ENCODE measurements at regions of chr12 and their contacts with region 1.

Region 1: DNA sequence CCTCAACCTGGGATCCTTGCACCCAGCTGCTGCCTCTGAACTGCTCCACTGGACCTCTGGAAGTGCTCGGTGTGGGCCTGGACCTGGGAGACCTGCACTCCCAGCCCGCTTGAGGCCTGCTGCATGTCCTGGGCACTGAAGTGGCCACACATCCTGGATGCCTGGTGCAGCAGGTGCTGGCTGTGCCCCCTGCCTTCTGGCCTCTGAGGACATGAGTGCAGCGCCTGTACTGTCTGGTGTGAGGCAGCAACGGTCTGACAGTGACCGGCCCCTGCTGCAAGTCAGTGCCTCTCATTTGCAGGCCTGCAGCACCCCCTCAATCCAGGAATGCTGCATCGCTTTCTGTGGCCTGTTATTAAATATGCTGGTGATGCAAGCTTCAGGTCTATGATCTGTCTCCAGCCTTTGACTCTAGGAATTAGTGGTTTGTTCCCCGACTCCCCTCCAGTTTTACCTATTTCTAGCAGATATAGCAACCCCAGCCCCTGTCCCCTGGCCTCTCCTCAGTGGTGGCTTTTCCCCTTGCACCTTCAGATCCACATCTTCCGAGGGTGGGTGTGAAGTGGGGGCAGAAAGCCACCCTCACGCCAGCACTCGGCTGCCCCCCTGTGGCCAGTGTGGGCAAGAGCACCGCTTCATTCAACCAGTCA is 3.6 kb downstream of the SMIM41 start:
- DNase-seq: no peak
- ATAC-seq: peak; percentile 79
- H3K4me3 ChIP-seq: no peak overlapping the region
- H3K27ac ChIP-seq: no peak overlapping the region
- H3K4me1 ChIP-seq: peaks cover 16% of the 10 kb centered on the region
- H3K27me3 ChIP-seq: no peaks in the 10 kb centered on the region; a peak in 1 of 4 replicates
- CTCF ChIP-seq: peak; percentile 91 to 98 (median 98)
- EP300 ChIP-seq: no peak
- POLR2A ChIP-seq: no peak
- RAD21 ChIP-seq: peak; percentile 90

Region 2: DNA sequence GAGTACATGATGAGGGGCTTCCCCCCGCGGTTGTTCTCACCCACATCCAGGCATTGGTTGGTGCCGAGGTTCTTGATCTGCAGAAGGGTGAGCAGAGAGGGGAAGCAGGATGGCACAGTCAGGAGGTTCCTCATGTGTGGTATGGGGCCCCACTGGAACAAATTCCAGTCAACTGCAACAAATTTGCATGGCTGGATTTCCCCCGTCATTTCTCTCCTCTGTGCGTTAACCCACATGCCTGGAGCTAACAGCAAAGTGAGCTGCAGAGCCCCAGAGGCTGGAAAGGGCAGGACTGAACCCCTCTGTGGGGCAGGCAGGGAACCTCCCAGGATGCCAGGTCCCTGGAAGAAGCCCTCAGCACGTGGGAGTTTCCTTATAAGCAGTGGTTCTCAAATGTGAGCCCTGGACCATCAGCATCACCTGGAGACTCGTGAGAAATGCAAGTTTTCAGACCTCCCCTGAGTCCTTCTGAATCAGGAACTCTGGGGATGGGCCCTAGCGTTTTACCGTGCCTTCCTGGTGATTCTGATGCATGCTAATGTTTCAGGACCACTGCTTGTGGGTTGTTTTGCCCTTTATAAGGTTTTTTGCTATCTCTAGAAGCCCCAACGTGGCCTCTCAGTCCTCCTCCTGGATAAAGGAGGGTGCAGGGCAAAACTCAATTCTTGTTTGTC is 725.6 kb before region 1 on chr12:
- CTCF ChIA-PET with region 1: no interaction called
- POLR2A ChIA-PET with region 1: no interaction called
- RAD21 ChIA-PET with region 1: no interaction called
- SMC1A ChIA-PET with region 1: no interaction called
- in situ Hi-C with region 1: no loop called
- intact Hi-C with region 1: no loop called
- DNase-seq: peak; percentile 64
- ATAC-seq: peak; percentile 93
- H3K4me3 ChIP-seq: 0 out of 2 replicates have a peak overlapping the region, but pooled peaks have one; percentile 5
- H3K27ac ChIP-seq: peak overlapping the region; percentile 61
- H3K4me1 ChIP-seq: peaks cover 21% of the 10 kb centered on the region
- H3K27me3 ChIP-seq: no peaks in the 10 kb centered on the region
- CTCF ChIP-seq: no peak
- EP300 ChIP-seq: peak; percentile 10 to 44; a peak in 1 of 4 replicates
- POLR2A ChIP-seq: no peak
- RAD21 ChIP-seq: no peak

Region 3: GRCh38 chr12:51970904-51971646 is 112.0 kb before region 1 on chr12:
- CTCF ChIA-PET with region 1: no interaction called
- POLR2A ChIA-PET with region 1: no interaction called
- RAD21 ChIA-PET with region 1: no interaction called
- SMC1A ChIA-PET with region 1: no interaction called
- in situ Hi-C with region 1: no loop called
- intact Hi-C with region 1: no loop called
- DNase-seq: peak; percentile 93
- ATAC-seq: peak; percentile 97
- H3K4me3 ChIP-seq: no peak overlapping the region
- H3K27ac ChIP-seq: no peak overlapping the region
- H3K4me1 ChIP-seq: peaks cover 30% of the 10 kb centered on the region
- H3K27me3 ChIP-seq: peaks cover 0 to 8% of the 10 kb centered on the region in 2 experiments; a peak in 3 of 4 replicates
- CTCF ChIP-seq: peak; percentile 47 to 64 (median 60)
- EP300 ChIP-seq: peak; percentile 81 to 87; a peak in 3 of 4 replicates
- POLR2A ChIP-seq: no peak
- RAD21 ChIP-seq: 0 out of 2 replicates have a peak, but pooled peaks have one; percentile 8

Region 4: DNA sequence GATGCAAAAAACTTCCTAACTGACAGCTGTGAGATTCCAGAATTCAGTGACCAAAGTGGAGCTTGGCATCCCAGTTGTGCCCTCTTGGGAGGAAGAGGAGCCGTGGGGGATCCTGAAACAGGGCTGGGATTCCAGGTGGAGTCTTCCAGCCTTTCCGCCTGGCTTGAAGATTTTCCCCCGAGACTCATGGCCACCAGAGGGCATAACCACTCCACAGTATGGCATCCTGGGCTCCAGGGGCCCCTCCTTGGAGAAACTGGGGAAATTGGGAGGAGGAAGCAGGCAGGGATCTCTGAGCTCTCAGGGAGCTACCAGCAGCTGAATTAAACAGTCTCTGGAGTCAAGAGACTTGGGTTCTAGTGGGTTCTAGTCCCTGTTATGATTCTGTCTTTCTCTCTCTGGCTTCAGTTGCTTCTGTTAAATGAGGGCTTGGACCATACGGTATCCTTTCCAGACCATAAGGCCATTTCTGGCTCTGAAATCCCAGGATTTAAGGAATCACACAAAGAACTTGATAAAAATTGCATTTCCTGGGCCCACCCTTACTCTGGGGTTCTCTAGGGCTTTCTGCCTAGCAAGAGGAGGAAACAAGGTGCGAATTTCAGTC is 79.0 kb before region 1 on chr12:
- CTCF ChIA-PET with region 1: interaction called, 11 read pairs
- POLR2A ChIA-PET with region 1: no interaction called
- RAD21 ChIA-PET with region 1: no interaction called
- SMC1A ChIA-PET with region 1: interaction called, 5 read pairs
- in situ Hi-C with region 1: no loop called
- intact Hi-C with region 1: no loop called
- DNase-seq: no peak
- ATAC-seq: no peak
- H3K4me3 ChIP-seq: no peak overlapping the region
- H3K27ac ChIP-seq: no peak overlapping the region
- H3K4me1 ChIP-seq: peaks cover 11% of the 10 kb centered on the region
- H3K27me3 ChIP-seq: peaks cover 9 to 21% of the 10 kb centered on the region in 2 experiments; a peak in 3 of 4 replicates
- CTCF ChIP-seq: peak; percentile 37 to 68 (median 59); a peak in 5 of 6 replicates
- EP300 ChIP-seq: no peak
- POLR2A ChIP-seq: no peak
- RAD21 ChIP-seq: peak; percentile 56

Region 5: GRCh38 chr12:52032804-52033502 is 50.2 kb before region 1 on chr12:
- CTCF ChIA-PET with region 1: interaction called, 622 read pairs
- POLR2A ChIA-PET with region 1: interaction called, 7 read pairs
- RAD21 ChIA-PET with region 1: interaction called, 88 read pairs
- SMC1A ChIA-PET with region 1: interaction called, 322 read pairs
- in situ Hi-C with region 1: loop called (anchors 5 kb)
- intact Hi-C with region 1: no loop called
- DNase-seq: peak; percentile 55
- ATAC-seq: peak; percentile 94
- H3K4me3 ChIP-seq: peak overlapping the region; percentile 51; the same call in 1 of the 2 replicates
- H3K27ac ChIP-seq: no peak overlapping the region
- H3K4me1 ChIP-seq: peaks cover 17% of the 10 kb centered on the region
- H3K27me3 ChIP-seq: no peaks in the 10 kb centered on the region; a peak in 1 of 4 replicates
- CTCF ChIP-seq: no peak
- EP300 ChIP-seq: no peak
- POLR2A ChIP-seq: peak; percentile 62
- RAD21 ChIP-seq: no peak

Region 6: DNA sequence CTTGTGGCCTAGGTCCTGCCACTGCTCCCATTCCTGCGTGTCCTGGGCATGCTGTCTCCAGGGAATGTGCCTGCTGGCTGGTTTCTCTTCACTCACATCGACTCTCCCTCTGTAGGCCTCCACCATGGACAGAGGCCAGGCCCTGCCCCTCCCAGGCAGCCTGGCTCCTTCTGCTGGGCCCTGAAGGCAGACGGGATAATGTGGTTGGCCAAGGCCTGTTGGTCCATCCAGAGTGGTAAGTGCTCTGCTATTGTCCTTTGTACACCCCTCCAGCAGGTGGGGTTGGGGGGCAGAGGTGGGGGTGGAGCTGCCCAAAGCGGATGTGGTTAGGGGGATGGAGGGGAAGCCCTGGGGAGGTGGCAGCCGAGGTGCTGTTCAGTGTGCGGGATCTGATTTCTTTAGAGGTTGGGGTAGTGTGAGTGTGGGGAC is 41.4 kb before region 1 on chr12:
- CTCF ChIA-PET with region 1: interaction called, 11 read pairs
- POLR2A ChIA-PET with region 1: no interaction called
- RAD21 ChIA-PET with region 1: interaction called, 5 read pairs
- SMC1A ChIA-PET with region 1: no interaction called
- in situ Hi-C with region 1: no loop called
- intact Hi-C with region 1: no loop called
- DNase-seq: no peak
- ATAC-seq: peak; percentile 66
- H3K4me3 ChIP-seq: no peak overlapping the region
- H3K27ac ChIP-seq: no peak overlapping the region; the same call in 1 of the 2 replicates
- H3K4me1 ChIP-seq: peaks cover 15% of the 10 kb centered on the region
- H3K27me3 ChIP-seq: no peaks in the 10 kb centered on the region
- CTCF ChIP-seq: peak; percentile 7 to 28 (median 19); a peak in 2 of 6 replicates
- EP300 ChIP-seq: no peak; a peak in 1 of 4 replicates
- POLR2A ChIP-seq: no peak
- RAD21 ChIP-seq: peak; percentile 36; the same call in 1 of the 2 replicates

Region 7: DNA sequence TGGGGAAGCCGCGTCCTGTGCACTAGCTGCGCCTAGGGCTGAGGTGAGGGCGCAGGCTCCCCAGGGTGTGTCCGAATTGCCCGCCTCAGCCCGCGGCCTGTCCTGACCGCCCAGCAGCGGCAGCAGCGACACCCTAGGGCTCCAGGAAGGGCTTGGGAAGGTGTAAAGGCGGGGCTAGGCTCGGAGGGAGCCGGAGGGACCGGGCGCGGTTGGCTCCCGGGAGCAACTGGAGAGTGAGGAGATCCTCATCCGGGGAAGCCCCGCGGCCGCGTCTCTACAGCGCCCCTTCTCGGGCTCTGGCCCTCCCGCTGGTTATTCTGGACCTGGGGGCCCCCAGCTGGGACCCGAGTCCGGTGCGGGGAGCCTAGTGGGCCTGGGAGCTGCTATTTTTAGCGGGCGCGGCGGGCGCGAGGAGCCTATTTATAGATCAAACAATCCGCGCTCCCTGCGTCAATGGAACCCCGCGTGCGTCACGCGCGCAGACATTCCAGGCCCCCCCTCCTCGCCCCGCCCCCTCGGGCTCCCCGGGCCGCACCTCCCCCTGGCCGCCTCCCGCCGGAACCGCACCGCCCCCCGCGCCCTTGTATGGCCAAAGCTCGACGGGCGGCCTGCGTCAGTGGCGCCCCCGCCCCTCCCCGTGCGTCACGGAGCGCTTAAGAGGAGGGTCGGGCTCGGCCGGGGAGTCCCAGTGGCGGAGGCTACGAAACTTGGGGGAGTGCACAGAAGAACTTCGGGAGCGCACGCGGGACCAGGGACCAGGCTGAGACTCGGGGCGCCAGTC is 32.2 kb before region 1 on chr12 and contains the start of gene NR4A1:
- CTCF ChIA-PET with region 1: interaction called, 6 read pairs
- POLR2A ChIA-PET with region 1: interaction called, 5 read pairs
- RAD21 ChIA-PET with region 1: interaction called, 10 read pairs
- SMC1A ChIA-PET with region 1: interaction called, 4 read pairs
- in situ Hi-C with region 1: no loop called
- intact Hi-C with region 1: no loop called
- DNase-seq: peak; percentile 49
- ATAC-seq: peak; percentile 85
- H3K4me3 ChIP-seq: peak within 1 kb of the TSS; percentile 76
- H3K27ac ChIP-seq: peak within 1 kb of the TSS; percentile 67
- H3K4me1 ChIP-seq: peaks cover 18% of the 10 kb centered on the region
- H3K27me3 ChIP-seq: no peaks in the 10 kb centered on the region
- CTCF ChIP-seq: peak in 2 of 3 experiments; percentile 5 to 31; a peak in 2 of 6 replicates
- EP300 ChIP-seq: peak; percentile 87 to 88
- POLR2A ChIP-seq: peak; percentile 85
- RAD21 ChIP-seq: no peak
- polyA plus RNA-seq, gene NR4A1: 0.05 TPM in 1 of 2 experiments, not detected in the other

Region 8: GRCh38 chr12:52069327-52070184 is 13.6 kb before region 1 on chr12 and contains the start of gene ATG101:
- CTCF ChIA-PET with region 1: interaction called, 55 read pairs
- POLR2A ChIA-PET with region 1: interaction called, 6 read pairs
- RAD21 ChIA-PET with region 1: interaction called, 28 read pairs
- SMC1A ChIA-PET with region 1: interaction called, 36 read pairs
- in situ Hi-C with region 1: no loop called
- intact Hi-C with region 1: no loop called
- DNase-seq: peak; percentile 73
- ATAC-seq: peak; percentile 93
- H3K4me3 ChIP-seq: peak within 1 kb of the TSS; percentile 98
- H3K27ac ChIP-seq: peak within 1 kb of the TSS; percentile 95
- H3K4me1 ChIP-seq: peaks cover 13% of the 10 kb centered on the region
- H3K27me3 ChIP-seq: no peaks in the 10 kb centered on the region; a peak in 1 of 4 replicates
- CTCF ChIP-seq: peak; percentile 91 to 96 (median 95)
- EP300 ChIP-seq: peak; percentile 52 to 56; a peak in 2 of 4 replicates
- POLR2A ChIP-seq: peak; percentile 94
- RAD21 ChIP-seq: no peak; the same call in 1 of the 2 replicates
- polyA plus RNA-seq, gene ATG101: 2.7 to 5.6 TPM

Region 9: GRCh38 chr12:52327830-52328822 is 245.0 kb after region 1 on chr12:
- CTCF ChIA-PET with region 1: no interaction called
- POLR2A ChIA-PET with region 1: no interaction called
- RAD21 ChIA-PET with region 1: no interaction called
- SMC1A ChIA-PET with region 1: no interaction called
- in situ Hi-C with region 1: no loop called
- intact Hi-C with region 1: no loop called
- DNase-seq: no peak
- ATAC-seq: no peak; the same call in 2 of the 3 replicates
- H3K4me3 ChIP-seq: no peak overlapping the region
- H3K27ac ChIP-seq: no peak overlapping the region
- H3K4me1 ChIP-seq: peaks cover 7% of the 10 kb centered on the region
- H3K27me3 ChIP-seq: peaks cover 0 to 4% of the 10 kb centered on the region in 2 experiments; a peak in 2 of 4 replicates
- CTCF ChIP-seq: no peak
- EP300 ChIP-seq: no peak
- POLR2A ChIP-seq: no peak
- RAD21 ChIP-seq: no peak